ENCODE measurements at regions of chr3 and their contacts with region 1.

Region 1: GRCh38 chr3:169772897-169773828 is at the start of gene MYNN:
- DNase-seq: peak; percentile 98
- H3K4me3 ChIP-seq: peak within 1 kb of the TSS; percentile 59 to 93 (median 88)
- H3K27ac ChIP-seq: peak within 1 kb of the TSS; percentile 96 to 100 (median 100)
- H3K4me1 ChIP-seq: peaks cover 23 to 60% (median 43%) of the 10 kb centered on the region in 6 donors
- H3K27me3 ChIP-seq: no peaks in the 10 kb centered on the region
- CTCF ChIP-seq: peak in 3 of 11 experiments; percentile 9 to 13 (median 10)
- POLR2A ChIP-seq: peak; percentile 95 to 98 (median 96)
- total RNA-seq, gene MYNN: 14.6 to 21.8 (median 16.2) TPM

Region 2: DNA sequence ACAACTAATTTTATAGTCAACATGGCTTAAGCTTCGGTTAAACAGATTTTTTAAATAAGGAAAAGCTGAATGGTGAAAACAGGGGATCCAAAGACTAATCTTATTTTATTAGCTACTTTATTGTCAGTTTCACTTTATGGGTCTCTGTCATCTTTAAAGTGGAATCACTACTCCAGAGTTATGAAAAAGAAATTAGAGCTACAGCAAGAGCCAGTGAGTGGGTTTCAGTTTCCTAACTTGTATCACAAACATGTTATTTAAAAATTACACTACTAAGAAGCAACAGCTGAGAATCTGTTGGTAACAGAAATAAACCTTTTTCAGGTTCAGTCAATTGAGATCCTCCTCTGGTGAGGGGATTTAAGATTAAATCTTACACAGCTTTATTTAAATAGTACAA is 398.4 kb after region 1 on chr3:
- intact Hi-C with region 1: loop called (anchors 10 kb)
- DNase-seq: no peak
- H3K4me3 ChIP-seq: no peak overlapping the region
- H3K27ac ChIP-seq: peak overlapping the region in 4 of 8 donors; percentile 24 to 53 (median 40)
- H3K4me1 ChIP-seq: peaks cover 12 to 85% (median 56%) of the 10 kb centered on the region in 6 donors
- H3K27me3 ChIP-seq: no peaks in the 10 kb centered on the region
- CTCF ChIP-seq: no peak
- POLR2A ChIP-seq: no peak

Measured in spleen (tissue), 13 donors.